Activated T-helper 2 cell treated with anti-CD3 and anti-CD28 coated beads, Interferon-gamma antibody, Interleukin-2, Interleukin-4, amounts not matched to agents 10 μg/mL and 5 μg/mL and 100 μg/mL, durations not matched to agents 14 hours and 24 hours and 36 hours (primary cell): ENCODE measurements at regions of chr7 and their contacts with region 1.

Region 1: DNA sequence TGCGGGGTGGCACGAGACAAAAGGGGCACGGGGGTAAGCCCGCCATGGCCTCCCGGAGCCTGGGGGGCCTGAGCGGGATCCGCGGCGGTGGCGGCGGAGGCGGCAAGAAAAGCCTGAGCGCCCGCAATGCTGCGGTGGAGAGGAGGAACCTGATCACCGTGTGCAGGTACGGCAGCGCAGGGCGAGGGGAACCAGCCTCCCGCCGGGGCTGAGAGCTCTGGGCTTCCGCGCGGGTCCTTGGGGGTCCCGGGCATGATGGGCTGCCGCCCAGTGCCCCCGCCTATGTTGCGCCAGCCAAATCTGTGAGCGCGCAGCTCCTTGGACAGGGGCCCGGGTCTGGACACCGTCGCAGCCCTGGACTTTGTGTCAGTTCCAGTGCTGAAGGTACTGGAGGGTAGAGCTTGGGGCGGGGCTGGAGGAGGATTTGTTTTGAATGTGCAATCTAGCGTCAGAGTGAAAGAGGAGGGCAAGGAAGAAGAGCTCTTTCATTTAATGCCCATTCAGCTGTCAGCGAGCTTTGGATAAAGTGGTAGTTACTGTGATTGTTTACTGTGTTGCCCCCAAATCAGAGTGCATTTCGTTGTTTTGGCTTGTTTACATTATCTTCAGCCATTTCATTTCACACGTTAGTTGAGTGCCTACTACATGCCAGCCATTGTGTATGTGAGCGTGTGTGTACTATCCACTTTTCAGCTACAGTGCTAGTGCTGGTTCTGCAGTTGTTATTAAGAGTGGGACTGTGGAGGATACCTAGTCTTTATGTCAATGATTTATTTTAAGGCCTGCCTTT is 777 bp downstream of the RUNDC3B start:
- DNase-seq: no peak
- H3K4me3 Mint-ChIP-seq: peak overlapping the region; percentile 60
- H3K27ac Mint-ChIP-seq: no peak overlapping the region
- H3K4me1 Mint-ChIP-seq: peaks cover 8% of the 10 kb centered on the region
- H3K27me3 Mint-ChIP-seq: peaks cover 21% of the 10 kb centered on the region

Region 2: GRCh38 chr7:87152107-87152844 is 476.7 kb before region 1 on chr7 and contains the start of gene DMTF1:
- intact Hi-C with region 1: loop called (anchors 10 kb)
- DNase-seq: peak; percentile 83
- H3K4me3 Mint-ChIP-seq: peak within 1 kb of the TSS; percentile 93
- H3K27ac Mint-ChIP-seq: peak within 1 kb of the TSS; percentile 96
- H3K4me1 Mint-ChIP-seq: peaks cover 39% of the 10 kb centered on the region
- H3K27me3 Mint-ChIP-seq: no peaks in the 10 kb centered on the region
- total RNA-seq, gene DMTF1: 103 and 112 TPM in 2 replicates

Region 3: DNA sequence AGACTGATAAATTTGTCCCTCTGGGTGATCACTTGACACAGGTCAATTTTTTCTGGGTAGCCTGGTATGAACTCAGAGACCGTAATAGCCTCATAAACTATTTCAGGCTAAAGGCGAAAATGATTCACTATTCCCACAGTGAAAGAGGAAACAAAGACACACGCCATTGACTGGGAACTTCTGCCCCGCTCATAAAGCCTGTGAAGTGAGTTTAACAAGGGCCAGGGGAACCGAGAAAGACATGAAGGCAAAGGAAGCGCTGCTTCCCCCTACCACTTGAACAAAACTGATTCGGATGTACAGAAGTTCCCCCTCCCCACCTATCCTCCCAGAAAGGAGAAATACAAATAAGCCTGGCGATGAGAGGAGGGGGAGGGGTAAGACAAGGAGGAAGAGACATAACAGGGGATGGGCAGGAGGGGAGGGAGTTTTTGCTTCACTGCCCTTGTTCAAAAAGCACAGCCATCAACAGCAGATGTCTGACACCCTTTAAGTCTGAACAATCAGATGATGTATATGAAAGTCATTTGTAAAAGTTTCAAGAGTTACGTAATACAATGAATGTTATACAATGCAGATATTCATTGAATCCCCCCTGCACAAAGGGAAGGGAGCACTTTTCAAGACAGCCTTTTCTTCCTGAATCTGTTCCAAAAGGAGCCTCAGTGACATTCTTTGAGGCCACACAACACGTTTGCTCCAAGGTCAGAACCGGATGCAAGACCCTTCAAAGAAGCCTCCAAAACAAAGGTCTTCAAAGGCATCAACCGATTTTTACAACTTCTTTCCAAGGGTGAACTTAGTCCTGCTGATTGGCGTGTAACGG is 154.2 kb before region 1 on chr7:
- intact Hi-C with region 1: loop called (anchors 10 kb)
- DNase-seq: no peak
- H3K4me3 Mint-ChIP-seq: peak overlapping the region; percentile 7
- H3K27ac Mint-ChIP-seq: no peak overlapping the region
- H3K4me1 Mint-ChIP-seq: peaks cover 4% of the 10 kb centered on the region
- H3K27me3 Mint-ChIP-seq: peaks cover 42% of the 10 kb centered on the region

Region 4: GRCh38 chr7:87510411-87510875 is 118.5 kb before region 1 on chr7:
- intact Hi-C with region 1: no loop called
- DNase-seq: no peak
- H3K4me3 Mint-ChIP-seq: no peak overlapping the region
- H3K27ac Mint-ChIP-seq: no peak overlapping the region
- H3K4me1 Mint-ChIP-seq: peaks cover 15% of the 10 kb centered on the region
- H3K27me3 Mint-ChIP-seq: no peaks in the 10 kb centered on the region

Region 5: DNA sequence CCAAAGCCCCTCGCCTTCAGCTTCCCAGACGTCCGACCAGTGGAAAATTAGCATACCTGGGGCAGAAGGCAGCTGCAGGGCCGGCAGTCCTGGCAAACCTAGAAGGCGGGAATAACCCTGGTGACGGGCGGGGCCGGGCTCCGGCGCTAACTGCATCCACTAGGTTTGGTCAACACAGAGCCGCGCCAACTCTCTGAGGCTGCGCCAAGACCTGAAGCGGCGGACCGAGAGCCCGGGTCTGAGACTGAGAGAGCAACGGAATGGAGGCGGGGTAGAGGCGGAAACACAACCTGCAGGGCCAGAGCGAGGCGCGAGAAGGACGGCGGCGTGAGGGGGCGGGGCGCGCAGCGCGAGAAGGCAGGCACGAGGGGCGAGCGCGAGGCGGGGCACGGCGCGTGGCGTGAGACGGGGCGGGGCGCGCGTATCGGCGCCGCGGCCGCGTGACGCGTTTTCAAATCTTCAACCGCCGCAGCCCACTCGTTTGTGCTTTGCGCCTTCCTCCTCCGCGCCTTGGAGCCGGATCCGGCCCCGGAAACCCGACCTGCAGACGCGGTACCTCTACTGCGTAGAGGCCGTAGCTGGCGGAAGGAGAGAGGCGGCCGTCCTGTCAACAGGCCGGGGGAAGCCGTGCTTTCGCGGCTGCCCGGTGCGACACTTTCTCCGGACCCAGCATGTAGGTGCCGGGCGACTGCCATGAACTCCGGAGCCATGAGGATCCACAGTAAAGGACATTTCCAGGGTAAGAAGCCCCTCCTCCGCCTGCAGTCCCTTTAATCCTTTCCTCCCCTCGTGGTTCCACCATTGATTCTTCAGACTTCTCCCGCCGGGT is 247.3 kb after region 1 on chr7 and contains the starts of genes DBF4 and SLC25A40:
- intact Hi-C with region 1: loop called (anchors 1 kb)
- DNase-seq: peak; percentile 96
- H3K4me3 Mint-ChIP-seq: peak within 1 kb of the TSS; percentile 96
- H3K27ac Mint-ChIP-seq: peak within 1 kb of the TSS; percentile 97
- H3K4me1 Mint-ChIP-seq: peaks cover 49% of the 10 kb centered on the region
- H3K27me3 Mint-ChIP-seq: no peaks in the 10 kb centered on the region
- total RNA-seq, gene DBF4: 72.3 and 75.3 TPM in 2 replicates
- total RNA-seq, gene SLC25A40: 48.7 and 49.3 TPM in 2 replicates

Region 6: GRCh38 chr7:88101769-88102168 is 472.8 kb after region 1 on chr7:
- intact Hi-C with region 1: loop called (anchors 10 kb)
- DNase-seq: no peak
- H3K4me3 Mint-ChIP-seq: no peak overlapping the region
- H3K27ac Mint-ChIP-seq: peak overlapping the region; percentile 71
- H3K4me1 Mint-ChIP-seq: peaks cover 24% of the 10 kb centered on the region
- H3K27me3 Mint-ChIP-seq: no peaks in the 10 kb centered on the region